B cell (primary cell): ENCODE measurements at regions of chr2 and their contacts with region 1.

Region 1: GRCh38 chr2:60992985-60993392 is 24.5 kb upstream of the PEX13 start:
- DNase-seq: peak; percentile 90
- ATAC-seq: peak; percentile 94
- H3K4me3 ChIP-seq: peak overlapping the region in 3 of 5 experiments; percentile 19 to 41 (median 21)
- H3K4me3 Mint-ChIP-seq: peak overlapping the region; percentile 73
- H3K27ac ChIP-seq: peak overlapping the region; percentile 86 to 95
- H3K27ac Mint-ChIP-seq: peak overlapping the region; percentile 92
- H3K4me1 ChIP-seq: peaks cover 55 to 58% of the 10 kb centered on the region in 2 donors
- H3K4me1 Mint-ChIP-seq: peaks cover 70% of the 10 kb centered on the region
- H3K27me3 ChIP-seq: no peaks in the 10 kb centered on the region
- H3K27me3 Mint-ChIP-seq: no peaks in the 10 kb centered on the region
- CTCF ChIP-seq: no peak

Region 2: GRCh38 chr2:60972889-60973656 is 19.9 kb before region 1 on chr2:
- CTCF ChIA-PET with region 1: interaction called, 52 read pairs
- POLR2A ChIA-PET with region 1: interaction called, 24 read pairs
- intact Hi-C with region 1: loop called (anchors 1 kb)
- DNase-seq: no peak
- ATAC-seq: peak; percentile 2
- H3K4me3 ChIP-seq: peak overlapping the region in 2 of 5 experiments; percentile 7 to 8
- H3K4me3 Mint-ChIP-seq: peak overlapping the region; percentile 82
- H3K27ac ChIP-seq: peak overlapping the region; percentile 77 to 85
- H3K27ac Mint-ChIP-seq: peak overlapping the region; percentile 96
- H3K4me1 ChIP-seq: peaks cover 41 to 58% of the 10 kb centered on the region in 2 donors
- H3K4me1 Mint-ChIP-seq: peaks cover 74% of the 10 kb centered on the region
- H3K27me3 ChIP-seq: no peaks in the 10 kb centered on the region
- H3K27me3 Mint-ChIP-seq: no peaks in the 10 kb centered on the region
- CTCF ChIP-seq: no peak

Region 3: GRCh38 chr2:61065715-61066709 is 73.0 kb after region 1 on chr2 and contains the start of gene SANBR:
- CTCF ChIA-PET with region 1: no interaction called
- POLR2A ChIA-PET with region 1: no interaction called
- intact Hi-C with region 1: loop called (anchors 1 kb)
- DNase-seq: peak; percentile 89
- ATAC-seq: peak; percentile 98
- H3K4me3 ChIP-seq: peak within 1 kb of the TSS; percentile 45 to 81 (median 70)
- H3K4me3 Mint-ChIP-seq: peak within 1 kb of the TSS; percentile 96
- H3K27ac ChIP-seq: peak within 1 kb of the TSS in 1 of 2 donors; percentile 24
- H3K27ac Mint-ChIP-seq: peak within 1 kb of the TSS; percentile 89
- H3K4me1 ChIP-seq: peaks cover 12 to 17% of the 10 kb centered on the region in 2 donors
- H3K4me1 Mint-ChIP-seq: peaks cover 13% of the 10 kb centered on the region
- H3K27me3 ChIP-seq: no peaks in the 10 kb centered on the region
- H3K27me3 Mint-ChIP-seq: no peaks in the 10 kb centered on the region
- CTCF ChIP-seq: no peak
- total RNA-seq, gene SANBR: 6.6 and 7.4 TPM in 2 replicates